Panc1 (cell line): ENCODE measurements at regions of chr19 and their contacts with region 1.

Region 1: DNA sequence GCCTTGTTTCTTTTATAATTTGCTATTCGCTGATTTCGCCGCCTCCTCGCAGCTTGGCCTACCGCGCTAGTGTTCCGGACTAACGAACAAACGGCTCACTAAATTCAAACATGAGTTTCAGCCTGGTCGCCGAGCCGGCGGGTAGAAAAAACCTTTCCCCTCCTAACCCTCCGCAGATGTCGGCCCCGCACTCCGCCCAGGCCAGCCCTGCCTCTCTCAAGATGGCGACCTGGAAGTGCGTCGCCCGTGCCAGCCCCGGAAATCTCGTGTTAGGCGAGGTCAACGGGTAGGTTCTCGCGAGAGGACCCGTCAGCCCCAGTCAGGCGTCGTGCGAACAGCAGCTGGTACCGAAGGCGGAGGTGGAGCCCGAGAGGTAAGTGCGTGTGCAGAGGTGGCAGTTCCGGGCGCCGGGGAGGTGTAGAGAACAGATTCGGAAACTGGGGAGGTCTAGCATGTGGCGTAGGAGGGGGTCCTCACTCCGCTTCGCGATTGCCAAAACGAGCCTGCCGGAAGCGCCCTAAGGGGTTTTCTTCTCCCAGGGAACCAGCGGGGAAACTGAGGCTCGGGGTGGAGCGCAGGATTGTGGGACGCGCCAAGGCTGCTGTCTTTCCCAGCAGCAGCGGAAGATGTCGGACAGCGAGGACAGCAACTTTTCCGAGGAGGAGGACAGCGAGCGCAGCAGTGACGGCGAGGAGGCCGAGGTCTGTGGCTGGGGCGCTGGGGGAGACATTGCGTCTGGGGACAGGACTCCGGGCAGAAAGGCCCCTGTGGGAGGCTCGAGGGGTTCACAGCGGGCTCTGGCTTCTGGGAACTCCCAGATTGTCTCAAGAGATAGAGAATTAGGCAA is at the start of gene SUPT5H:
- DNase-seq: peak; percentile 100
- ATAC-seq: peak; percentile 94
- H3K4me3 ChIP-seq: peak within 1 kb of the TSS; percentile 34 to 56
- H3K27ac ChIP-seq: peak within 1 kb of the TSS; percentile 85
- H3K4me1 ChIP-seq: peaks cover 32% of the 10 kb centered on the region
- H3K27me3 ChIP-seq: no peaks in the 10 kb centered on the region
- CTCF ChIP-seq: no peak
- total RNA-seq, gene SUPT5H: 1,614 TPM

Region 2: GRCh38 chr19:38683393-38684080 is 762.0 kb before region 1 on chr19:
- CTCF ChIA-PET with region 1: no interaction called
- POLR2A ChIA-PET with region 1: interaction called, 13 read pairs
- in situ Hi-C with region 1: no loop called
- intact Hi-C with region 1: no loop called
- DNase-seq: peak; percentile 100
- ATAC-seq: peak; percentile 87
- H3K4me3 ChIP-seq: peak overlapping the region in 1 of 2 experiments; percentile 10; a peak in 2 of 4 replicates
- H3K27ac ChIP-seq: peak overlapping the region; percentile 98
- H3K4me1 ChIP-seq: peaks cover 100% of the 10 kb centered on the region
- H3K27me3 ChIP-seq: no peaks in the 10 kb centered on the region
- CTCF ChIP-seq: no peak

Region 3: GRCh38 chr19:38862321-38863059 is 583.0 kb before region 1 on chr19:
- CTCF ChIA-PET with region 1: no interaction called
- POLR2A ChIA-PET with region 1: no interaction called
- in situ Hi-C with region 1: no loop called
- intact Hi-C with region 1: no loop called
- DNase-seq: no peak
- ATAC-seq: peak; percentile 39
- H3K4me3 ChIP-seq: no peak overlapping the region
- H3K27ac ChIP-seq: no peak overlapping the region
- H3K4me1 ChIP-seq: peaks cover 17% of the 10 kb centered on the region
- H3K27me3 ChIP-seq: no peaks in the 10 kb centered on the region
- CTCF ChIP-seq: no peak

Region 4: GRCh38 chr19:39319892-39320248 is 125.6 kb before region 1 on chr19:
- CTCF ChIA-PET with region 1: no interaction called
- POLR2A ChIA-PET with region 1: no interaction called
- in situ Hi-C with region 1: no loop called
- intact Hi-C with region 1: no loop called
- DNase-seq: no peak
- ATAC-seq: no peak
- H3K4me3 ChIP-seq: peak overlapping the region; percentile 34 to 56
- H3K27ac ChIP-seq: no peak overlapping the region; the same call in 1 of the 2 replicates
- H3K4me1 ChIP-seq: peaks cover 4% of the 10 kb centered on the region
- H3K27me3 ChIP-seq: peaks cover 6% of the 10 kb centered on the region
- CTCF ChIP-seq: no peak

Region 5: GRCh38 chr19:39406656-39407393 is 38.7 kb before region 1 on chr19 and contains the start of gene ZFP36:
- CTCF ChIA-PET with region 1: interaction called, 18 read pairs
- POLR2A ChIA-PET with region 1: interaction called, 15 read pairs
- in situ Hi-C with region 1: no loop called
- intact Hi-C with region 1: no loop called
- DNase-seq: peak; percentile 100
- ATAC-seq: peak; percentile 37
- H3K4me3 ChIP-seq: peak within 1 kb of the TSS; percentile 42 to 55
- H3K27ac ChIP-seq: peak within 1 kb of the TSS; percentile 92
- H3K4me1 ChIP-seq: peaks cover 76% of the 10 kb centered on the region
- H3K27me3 ChIP-seq: no peaks in the 10 kb centered on the region
- CTCF ChIP-seq: no peak
- total RNA-seq, gene ZFP36: 414 TPM

Region 6: GRCh38 chr19:39469036-39469435 is 23.5 kb after region 1 on chr19:
- CTCF ChIA-PET with region 1: interaction called, 91 read pairs
- POLR2A ChIA-PET with region 1: interaction called, 12 read pairs
- in situ Hi-C with region 1: no loop called
- intact Hi-C with region 1: loop called (anchors 2 kb)
- DNase-seq: no peak
- ATAC-seq: no peak
- H3K4me3 ChIP-seq: no peak overlapping the region
- H3K27ac ChIP-seq: no peak overlapping the region
- H3K4me1 ChIP-seq: no peaks in the 10 kb centered on the region
- H3K27me3 ChIP-seq: no peaks in the 10 kb centered on the region
- CTCF ChIP-seq: no peak

Region 7: GRCh38 chr19:39509233-39509632 is 63.7 kb after region 1 on chr19:
- CTCF ChIA-PET with region 1: interaction called, 88 read pairs
- POLR2A ChIA-PET with region 1: interaction called, 14 read pairs
- in situ Hi-C with region 1: loop called (anchors 5 kb)
- intact Hi-C with region 1: no loop called
- DNase-seq: no peak
- ATAC-seq: no peak
- H3K4me3 ChIP-seq: no peak overlapping the region
- H3K27ac ChIP-seq: no peak overlapping the region
- H3K4me1 ChIP-seq: peaks cover 16% of the 10 kb centered on the region
- H3K27me3 ChIP-seq: peaks cover 4% of the 10 kb centered on the region
- CTCF ChIP-seq: no peak

Region 8: GRCh38 chr19:39546599-39546998 is 101.1 kb after region 1 on chr19:
- CTCF ChIA-PET with region 1: interaction called, 118 read pairs
- POLR2A ChIA-PET with region 1: interaction called, 45 read pairs
- in situ Hi-C with region 1: no loop called
- intact Hi-C with region 1: no loop called
- DNase-seq: no peak
- ATAC-seq: no peak; the same call in 1 of the 2 replicates
- H3K4me3 ChIP-seq: no peak overlapping the region
- H3K27ac ChIP-seq: no peak overlapping the region
- H3K4me1 ChIP-seq: peaks cover 6% of the 10 kb centered on the region
- H3K27me3 ChIP-seq: peaks cover 20% of the 10 kb centered on the region
- CTCF ChIP-seq: no peak

Region 9: GRCh38 chr19:39846176-39846677 is 400.7 kb after region 1 on chr19 and contains the start of gene FBL:
- CTCF ChIA-PET with region 1: interaction called, 12 read pairs
- POLR2A ChIA-PET with region 1: interaction called, 18 read pairs
- in situ Hi-C with region 1: no loop called
- intact Hi-C with region 1: no loop called
- DNase-seq: peak; percentile 100
- ATAC-seq: peak; percentile 91
- H3K4me3 ChIP-seq: peak within 1 kb of the TSS; percentile 35 to 52
- H3K27ac ChIP-seq: peak within 1 kb of the TSS; percentile 83
- H3K4me1 ChIP-seq: peaks cover 60% of the 10 kb centered on the region
- H3K27me3 ChIP-seq: no peaks in the 10 kb centered on the region
- CTCF ChIP-seq: no peak
- total RNA-seq, gene FBL: 4,927 TPM

Region 10: GRCh38 chr19:40322871-40323615 is 877.6 kb after region 1 on chr19:
- CTCF ChIA-PET with region 1: no interaction called
- POLR2A ChIA-PET with region 1: no interaction called
- in situ Hi-C with region 1: no loop called
- intact Hi-C with region 1: no loop called
- DNase-seq: no peak
- ATAC-seq: peak; percentile 10
- H3K4me3 ChIP-seq: no peak overlapping the region
- H3K27ac ChIP-seq: no peak overlapping the region
- H3K4me1 ChIP-seq: no peaks in the 10 kb centered on the region
- H3K27me3 ChIP-seq: no peaks in the 10 kb centered on the region
- CTCF ChIP-seq: no peak

Region 11: GRCh38 chr19:40465557-40466150 is 1020.2 kb after region 1 on chr19 and contains the start of gene BLVRB:
- CTCF ChIA-PET with region 1: no interaction called
- POLR2A ChIA-PET with region 1: no interaction called
- in situ Hi-C with region 1: no loop called
- intact Hi-C with region 1: no loop called
- DNase-seq: peak; percentile 92
- ATAC-seq: peak; percentile 96
- H3K4me3 ChIP-seq: peak within 1 kb of the TSS; percentile 68 to 82
- H3K27ac ChIP-seq: peak within 1 kb of the TSS; percentile 82
- H3K4me1 ChIP-seq: peaks cover 10% of the 10 kb centered on the region; the same call in 1 of the 2 replicates
- H3K27me3 ChIP-seq: no peaks in the 10 kb centered on the region
- CTCF ChIP-seq: no peak
- total RNA-seq, gene BLVRB: 45.6 TPM